ENCODE measurements at regions of chr15 and their contacts with region 1.

Region 1: GRCh38 chr15:101008158-101009139 is 89.3 kb downstream of the LRRK1 start:
- DNase-seq: peak; percentile 40
- ATAC-seq: peak; percentile 95
- H3K4me3 ChIP-seq: peak overlapping the region; percentile 73
- H3K27ac ChIP-seq: peak overlapping the region; percentile 40; the same call in 1 of the 2 replicates
- H3K4me1 ChIP-seq: peaks cover 11% of the 10 kb centered on the region
- H3K27me3 ChIP-seq: no peaks in the 10 kb centered on the region
- CTCF ChIP-seq: peak; percentile 96 to 100 (median 98)
- EP300 ChIP-seq: no peak
- POLR2A ChIP-seq: no peak; the same call in none of the 2 replicates
- RAD21 ChIP-seq: peak; percentile 67

Region 2: GRCh38 chr15:100633763-100634075 is 374.7 kb before region 1 on chr15:
- CTCF ChIA-PET with region 1: interaction called, 7 read pairs
- POLR2A ChIA-PET with region 1: no interaction called
- RAD21 ChIA-PET with region 1: no interaction called
- SMC1A ChIA-PET with region 1: interaction called, 3 read pairs
- in situ Hi-C with region 1: loop called (anchors 5 kb)
- intact Hi-C with region 1: no loop called
- DNase-seq: no peak
- ATAC-seq: no peak
- H3K4me3 ChIP-seq: no peak overlapping the region
- H3K27ac ChIP-seq: no peak overlapping the region
- H3K4me1 ChIP-seq: no peaks in the 10 kb centered on the region
- H3K27me3 ChIP-seq: no peaks in the 10 kb centered on the region
- CTCF ChIP-seq: no peak
- EP300 ChIP-seq: no peak
- POLR2A ChIP-seq: no peak
- RAD21 ChIP-seq: no peak

Region 3: DNA sequence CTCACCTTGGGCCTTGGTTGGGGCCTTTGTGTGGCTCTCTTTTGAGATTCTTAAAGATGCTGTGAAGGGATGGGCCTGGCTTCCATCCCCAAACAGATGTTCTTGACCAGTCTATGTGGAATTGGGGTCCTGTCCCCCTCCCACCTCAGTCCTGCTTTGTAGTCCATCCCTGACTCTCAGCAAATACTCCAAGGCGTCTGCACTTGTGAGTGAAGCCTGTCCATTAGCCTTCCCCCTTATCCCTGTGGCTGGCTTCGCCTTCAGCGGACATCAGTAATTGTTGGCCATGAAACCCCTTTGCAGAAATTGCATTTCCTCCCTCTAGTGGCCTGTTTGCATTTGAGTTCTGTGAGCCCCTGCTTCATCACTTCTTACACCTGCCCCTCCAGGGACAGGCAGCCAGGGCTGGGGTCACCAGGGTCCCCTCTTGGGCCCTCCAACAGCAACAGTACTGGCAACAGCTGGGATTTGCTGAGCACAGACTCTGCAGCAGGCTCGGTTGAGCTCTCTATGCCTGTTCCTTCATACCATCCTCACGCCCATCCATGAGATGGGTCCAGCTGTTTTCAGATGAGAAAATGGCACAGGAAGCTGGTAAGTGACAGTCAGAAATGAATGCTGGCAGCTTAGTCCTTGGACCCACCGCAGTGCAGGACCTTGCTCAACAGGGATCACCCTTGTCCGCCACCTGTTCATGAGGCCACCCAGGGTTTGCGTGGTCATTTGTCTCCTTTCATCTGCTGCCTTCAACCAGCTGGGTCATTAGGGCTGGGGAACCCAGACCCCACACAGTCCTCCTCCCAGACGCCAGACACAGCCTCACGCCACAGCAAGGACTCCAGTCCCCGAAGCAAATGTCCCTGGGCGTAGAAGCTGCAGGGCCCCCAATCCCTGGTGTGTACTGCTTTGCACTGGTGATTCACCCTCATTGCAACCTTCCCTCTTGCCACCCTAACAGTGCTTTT is 98.2 kb before region 1 on chr15:
- CTCF ChIA-PET with region 1: interaction called, 567 read pairs
- POLR2A ChIA-PET with region 1: no interaction called
- RAD21 ChIA-PET with region 1: interaction called, 287 read pairs
- SMC1A ChIA-PET with region 1: interaction called, 316 read pairs
- in situ Hi-C with region 1: loop called (anchors 5 kb)
- intact Hi-C with region 1: no loop called
- DNase-seq: no peak
- ATAC-seq: no peak
- H3K4me3 ChIP-seq: no peak overlapping the region
- H3K27ac ChIP-seq: no peak overlapping the region
- H3K4me1 ChIP-seq: no peaks in the 10 kb centered on the region
- H3K27me3 ChIP-seq: no peaks in the 10 kb centered on the region
- CTCF ChIP-seq: 0 out of 6 replicates have a peak, but pooled peaks have one; percentile 8 to 25 (median 9)
- EP300 ChIP-seq: no peak
- POLR2A ChIP-seq: no peak
- RAD21 ChIP-seq: no peak

Region 4: GRCh38 chr15:100934726-100935125 is 73.7 kb before region 1 on chr15:
- CTCF ChIA-PET with region 1: interaction called, 51 read pairs
- POLR2A ChIA-PET with region 1: interaction called, 4 read pairs
- RAD21 ChIA-PET with region 1: interaction called, 11 read pairs
- SMC1A ChIA-PET with region 1: interaction called, 9 read pairs
- in situ Hi-C with region 1: no loop called
- intact Hi-C with region 1: no loop called
- DNase-seq: no peak
- ATAC-seq: peak; percentile 75
- H3K4me3 ChIP-seq: no peak overlapping the region
- H3K27ac ChIP-seq: peak overlapping the region; percentile 54
- H3K4me1 ChIP-seq: peaks cover 57% of the 10 kb centered on the region
- H3K27me3 ChIP-seq: no peaks in the 10 kb centered on the region
- CTCF ChIP-seq: peak in 2 of 3 experiments; percentile 28 to 36; a peak in 4 of 6 replicates
- EP300 ChIP-seq: no peak
- POLR2A ChIP-seq: no peak
- RAD21 ChIP-seq: peak; percentile 41; the same call in 1 of the 2 replicates

Region 5: GRCh38 chr15:100958326-100959065 is 50.0 kb before region 1 on chr15:
- CTCF ChIA-PET with region 1: interaction called, 22 read pairs
- POLR2A ChIA-PET with region 1: no interaction called
- RAD21 ChIA-PET with region 1: interaction called, 3 read pairs
- SMC1A ChIA-PET with region 1: no interaction called
- in situ Hi-C with region 1: no loop called
- intact Hi-C with region 1: no loop called
- DNase-seq: no peak
- ATAC-seq: peak; percentile 87
- H3K4me3 ChIP-seq: no peak overlapping the region
- H3K27ac ChIP-seq: peak overlapping the region; percentile 17
- H3K4me1 ChIP-seq: peaks cover 10% of the 10 kb centered on the region
- H3K27me3 ChIP-seq: no peaks in the 10 kb centered on the region
- CTCF ChIP-seq: no peak
- EP300 ChIP-seq: no peak
- POLR2A ChIP-seq: no peak
- RAD21 ChIP-seq: no peak

Region 6: DNA sequence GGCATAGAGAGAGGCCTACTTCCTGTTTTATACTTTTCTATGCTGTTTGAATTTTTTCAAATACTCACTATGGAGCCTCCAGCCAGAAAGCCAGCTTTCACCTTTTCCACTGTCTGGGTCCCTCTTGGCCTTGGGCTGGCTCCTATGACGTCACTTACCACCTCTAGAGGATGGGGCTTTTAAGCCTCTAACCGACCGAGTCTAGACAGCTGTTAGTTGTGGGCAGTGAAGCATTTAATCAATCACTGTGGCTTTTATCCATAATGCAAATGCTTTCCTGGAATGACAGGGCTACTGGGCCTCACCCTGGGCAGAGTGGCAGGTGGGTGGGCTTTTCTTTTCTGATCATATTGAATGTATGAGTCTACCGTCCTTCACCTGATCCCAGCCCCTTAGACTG is 27.4 kb before region 1 on chr15:
- CTCF ChIA-PET with region 1: interaction called, 20 read pairs
- POLR2A ChIA-PET with region 1: no interaction called
- RAD21 ChIA-PET with region 1: interaction called, 5 read pairs
- SMC1A ChIA-PET with region 1: interaction called, 3 read pairs
- in situ Hi-C with region 1: no loop called
- intact Hi-C with region 1: no loop called
- DNase-seq: no peak
- ATAC-seq: peak; percentile 57
- H3K4me3 ChIP-seq: no peak overlapping the region
- H3K27ac ChIP-seq: no peak overlapping the region
- H3K4me1 ChIP-seq: peaks cover 4% of the 10 kb centered on the region; the same call in 1 of the 2 replicates
- H3K27me3 ChIP-seq: no peaks in the 10 kb centered on the region
- CTCF ChIP-seq: no peak
- EP300 ChIP-seq: no peak
- POLR2A ChIP-seq: no peak
- RAD21 ChIP-seq: no peak

Region 7: DNA sequence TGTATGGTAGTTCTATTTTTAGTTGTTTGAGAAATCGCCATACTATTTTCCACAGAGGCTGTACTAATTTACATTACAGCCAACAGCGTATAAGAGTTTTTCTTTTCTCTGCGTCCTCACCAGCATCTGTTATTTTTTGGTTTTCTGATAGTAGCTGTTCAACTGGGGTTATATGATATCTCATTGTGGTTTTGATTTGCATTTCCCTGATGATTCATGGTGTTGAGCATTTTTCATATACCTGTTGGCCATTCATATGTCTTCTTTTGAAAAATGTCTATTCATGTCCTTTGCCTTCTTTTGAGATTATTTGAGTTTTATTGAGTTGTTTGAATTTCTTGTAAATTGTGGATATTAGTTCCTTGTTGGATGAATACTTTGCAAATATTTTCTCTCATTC is 25.4 kb after region 1 on chr15:
- CTCF ChIA-PET with region 1: interaction called, 17 read pairs
- POLR2A ChIA-PET with region 1: no interaction called
- RAD21 ChIA-PET with region 1: no interaction called
- SMC1A ChIA-PET with region 1: interaction called, 3 read pairs
- in situ Hi-C with region 1: no loop called
- intact Hi-C with region 1: no loop called
- DNase-seq: no peak
- ATAC-seq: no peak
- H3K4me3 ChIP-seq: no peak overlapping the region
- H3K27ac ChIP-seq: no peak overlapping the region
- H3K4me1 ChIP-seq: peaks cover 11% of the 10 kb centered on the region
- H3K27me3 ChIP-seq: no peaks in the 10 kb centered on the region
- CTCF ChIP-seq: no peak
- EP300 ChIP-seq: no peak
- POLR2A ChIP-seq: no peak
- RAD21 ChIP-seq: no peak